OCI-LY7 (cell line): ENCODE measurements at regions of chr9 and their contacts with region 1.

Region 1: GRCh38 chr9:99184475-99185347 is 37.0 kb downstream of the ALG2 start:
- DNase-seq: peak; percentile 83
- H3K4me3 ChIP-seq: no peak overlapping the region
- H3K27ac ChIP-seq: no peak overlapping the region
- H3K4me1 ChIP-seq: peaks cover 26% of the 10 kb centered on the region
- CTCF ChIP-seq: peak; percentile 92

Region 2: DNA sequence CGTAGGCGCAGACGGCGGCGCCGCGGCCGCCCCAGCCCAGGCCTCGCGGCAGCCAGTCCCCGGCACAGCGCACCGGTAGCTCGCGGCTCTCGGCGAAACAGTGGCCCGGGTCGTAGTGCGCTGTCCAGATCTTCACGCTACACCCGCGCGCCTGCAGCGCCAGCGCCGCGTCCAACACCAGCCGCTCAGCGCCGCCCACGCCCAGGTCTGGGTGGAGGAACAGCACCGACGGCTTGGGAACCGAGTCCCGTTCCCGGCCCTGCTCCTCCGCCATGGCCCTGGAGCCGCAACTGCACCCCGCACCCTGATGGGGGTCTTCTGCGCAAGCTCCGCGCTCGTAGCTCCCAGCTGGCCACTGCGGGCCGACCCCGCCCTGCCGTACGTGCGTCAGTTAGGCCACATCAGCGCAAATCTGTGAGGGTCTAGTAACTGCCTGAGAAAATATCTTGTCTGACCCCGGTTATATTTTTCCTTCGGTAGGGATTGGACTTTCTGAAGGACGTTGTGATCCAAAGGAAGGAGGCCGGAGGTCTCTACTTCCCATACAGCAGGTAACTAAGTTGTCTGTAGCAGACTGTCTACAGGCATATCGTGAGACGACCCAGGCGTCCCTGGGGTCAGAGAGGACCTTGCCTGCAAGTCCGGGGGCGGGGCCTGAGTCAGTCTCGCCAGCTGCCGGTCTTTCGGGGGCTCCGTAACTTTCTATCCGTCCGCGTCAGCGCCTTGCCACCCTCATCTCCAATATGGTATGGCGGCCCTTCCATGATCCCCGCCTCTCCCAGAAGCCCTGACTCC is 37.1 kb after region 1 on chr9 and contains the starts of genes ALG2 and SEC61B:
- CTCF ChIA-PET with region 1: no interaction called
- POLR2A ChIA-PET with region 1: interaction called, 3 read pairs
- intact Hi-C with region 1: loop called (anchors 5 kb)
- DNase-seq: peak; percentile 96
- H3K4me3 ChIP-seq: peak within 1 kb of the TSS; percentile 91
- H3K27ac ChIP-seq: peak within 1 kb of the TSS; percentile 72
- H3K4me1 ChIP-seq: peaks cover 35% of the 10 kb centered on the region
- CTCF ChIP-seq: no peak
- total RNA-seq, gene ALG2: 22.2 and 26.5 TPM in 2 replicates
- total RNA-seq, gene SEC61B: 97.5 and 106 TPM in 2 replicates

Region 3: GRCh38 chr9:99266255-99267023 is 81.7 kb after region 1 on chr9:
- CTCF ChIA-PET with region 1: no interaction called
- POLR2A ChIA-PET with region 1: no interaction called
- intact Hi-C with region 1: loop called (anchors 2 kb)
- DNase-seq: peak; percentile 77
- H3K4me3 ChIP-seq: no peak overlapping the region
- H3K27ac ChIP-seq: no peak overlapping the region
- H3K4me1 ChIP-seq: peaks cover 4% of the 10 kb centered on the region
- CTCF ChIP-seq: peak; percentile 94

Region 4: DNA sequence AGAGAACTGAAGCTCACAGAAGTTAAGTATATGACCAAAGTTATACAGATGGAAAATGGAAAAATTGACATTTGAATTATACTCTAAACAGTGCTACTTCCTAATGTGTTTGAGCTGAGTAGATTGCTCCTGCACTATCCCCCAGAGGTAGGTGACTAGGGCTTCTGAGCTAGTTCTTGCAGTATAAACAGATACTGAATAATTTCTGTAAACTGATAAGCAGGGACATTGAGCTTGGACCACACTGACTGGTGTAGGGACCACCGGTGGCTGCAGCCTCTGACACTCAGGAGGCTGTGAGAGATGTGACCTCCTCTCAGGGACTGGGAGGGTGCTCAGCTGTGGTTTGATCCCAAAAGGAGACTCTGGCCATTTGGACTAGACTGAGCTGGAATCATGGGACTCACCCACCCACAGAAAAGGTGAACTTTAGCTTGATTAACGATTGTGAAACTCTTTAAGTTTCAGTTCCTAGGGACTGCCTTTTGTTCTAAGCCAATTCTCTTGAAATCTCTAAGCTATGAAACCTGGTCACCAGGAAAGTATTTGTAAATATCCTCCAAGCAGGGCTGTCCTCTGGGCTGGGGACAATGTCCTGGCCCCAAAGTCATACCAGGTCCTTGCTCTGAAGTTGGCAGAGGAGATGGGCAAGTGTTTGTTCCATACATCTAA is 328.9 kb after region 1 on chr9:
- CTCF ChIA-PET with region 1: no interaction called
- POLR2A ChIA-PET with region 1: no interaction called
- intact Hi-C with region 1: loop called (anchors 10 kb)
- DNase-seq: peak; percentile 22
- H3K4me3 ChIP-seq: no peak overlapping the region
- H3K27ac ChIP-seq: no peak overlapping the region
- H3K4me1 ChIP-seq: peaks cover 35% of the 10 kb centered on the region
- CTCF ChIP-seq: no peak

Region 5: GRCh38 chr9:100028201-100028784 is 843.6 kb after region 1 on chr9:
- CTCF ChIA-PET with region 1: no interaction called
- POLR2A ChIA-PET with region 1: no interaction called
- intact Hi-C with region 1: loop called (anchors 10 kb)
- DNase-seq: peak; percentile 83
- H3K4me3 ChIP-seq: no peak overlapping the region
- H3K27ac ChIP-seq: no peak overlapping the region
- H3K4me1 ChIP-seq: peaks cover 24% of the 10 kb centered on the region
- CTCF ChIP-seq: peak; percentile 99

Region 6: DNA sequence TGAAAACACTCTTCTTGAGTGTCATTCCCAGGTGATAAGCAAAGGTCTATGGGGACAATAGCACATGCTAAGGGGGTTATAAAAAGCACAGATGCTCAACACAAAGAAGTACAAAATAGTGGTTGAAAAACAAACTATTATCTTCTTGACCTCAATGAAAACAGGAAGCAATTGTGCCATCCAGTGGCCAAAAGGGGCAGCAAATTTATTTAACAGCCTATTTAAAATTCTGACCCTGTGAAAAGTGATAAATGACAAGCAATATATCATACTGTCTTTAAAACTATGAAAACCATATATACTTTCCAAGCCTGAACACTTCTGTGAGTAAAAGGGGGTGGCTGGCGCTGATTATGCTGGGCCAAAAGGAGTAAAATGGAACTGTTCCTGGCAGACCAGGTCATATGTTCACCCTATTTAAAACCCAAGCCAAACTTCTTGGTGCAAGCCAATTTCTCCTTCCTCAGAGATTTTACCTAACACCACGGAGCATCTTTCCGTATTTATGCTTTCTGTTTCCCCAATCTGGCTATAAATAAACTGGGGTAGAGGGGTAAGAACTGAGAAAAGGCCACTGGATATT is 1138.3 kb after region 1 on chr9:
- CTCF ChIA-PET with region 1: no interaction called
- POLR2A ChIA-PET with region 1: no interaction called
- intact Hi-C with region 1: loop called (anchors 10 kb)
- DNase-seq: peak; percentile 55
- H3K4me3 ChIP-seq: no peak overlapping the region
- H3K27ac ChIP-seq: no peak overlapping the region
- H3K4me1 ChIP-seq: no peaks in the 10 kb centered on the region
- CTCF ChIP-seq: peak; percentile 89